ENCODE measurements at regions of chr5 and their contacts with region 1.

Region 1: GRCh38 chr5:131589510-131590348 is 45.3 kb downstream of the RAPGEF6 start:
- DNase-seq: peak; percentile 74
- ATAC-seq: peak; percentile 87
- H3K4me3 ChIP-seq: no peak overlapping the region
- H3K27ac ChIP-seq: no peak overlapping the region
- H3K4me1 ChIP-seq: peaks cover 6% of the 10 kb centered on the region
- H3K27me3 ChIP-seq: no peaks in the 10 kb centered on the region
- CTCF ChIP-seq: peak; percentile 90
- POLR2A ChIP-seq: peak; percentile 41; the same call in 1 of the 2 replicates
- RAD21 ChIP-seq: peak; percentile 93

Region 2: GRCh38 chr5:131423056-131423455 is 166.7 kb before region 1 on chr5:
- CTCF ChIA-PET with region 1: no interaction called
- POLR2A ChIA-PET with region 1: no interaction called
- dilution Hi-C with region 1: no loop called
- in situ Hi-C with region 1: no loop called
- intact Hi-C with region 1: loop called (anchors 1 kb)
- DNase-seq: peak; percentile 27
- ATAC-seq: peak; percentile 79
- H3K4me3 ChIP-seq: no peak overlapping the region
- H3K27ac ChIP-seq: no peak overlapping the region
- H3K4me1 ChIP-seq: no peaks in the 10 kb centered on the region
- H3K27me3 ChIP-seq: no peaks in the 10 kb centered on the region
- CTCF ChIP-seq: peak; percentile 54
- POLR2A ChIP-seq: no peak
- RAD21 ChIP-seq: peak; percentile 71

Region 3: GRCh38 chr5:131634996-131635754 is 45.4 kb after region 1 on chr5 and contains the start of gene RAPGEF6:
- CTCF ChIA-PET with region 1: interaction called, 6 read pairs
- POLR2A ChIA-PET with region 1: interaction called, 3 read pairs
- dilution Hi-C with region 1: no loop called
- in situ Hi-C with region 1: no loop called
- intact Hi-C with region 1: loop called (anchors 2 kb)
- DNase-seq: peak; percentile 100
- ATAC-seq: peak; percentile 92
- H3K4me3 ChIP-seq: peak within 1 kb of the TSS; percentile 66
- H3K27ac ChIP-seq: peak within 1 kb of the TSS; percentile 93
- H3K4me1 ChIP-seq: peaks cover 5% of the 10 kb centered on the region
- H3K27me3 ChIP-seq: no peaks in the 10 kb centered on the region
- CTCF ChIP-seq: no peak
- POLR2A ChIP-seq: peak; percentile 87
- RAD21 ChIP-seq: no peak
- total RNA-seq, gene RAPGEF6: 18.8 and 30.3 TPM in 2 replicates

Measured in IMR-90 (cell line).